PC-3 (cell line): ENCODE measurements at regions of chr10 and their contacts with region 1.

Region 1: GRCh38 chr10:74103560-74104248 is 46.9 kb downstream of the AP3M1 start:
- DNase-seq: peak; percentile 90
- ATAC-seq: peak; percentile 87
- H3K4me3 ChIP-seq: no peak overlapping the region
- H3K27ac ChIP-seq: no peak overlapping the region
- H3K4me1 ChIP-seq: no peaks in the 10 kb centered on the region
- H3K27me3 ChIP-seq: no peaks in the 10 kb centered on the region
- CTCF ChIP-seq: peak; percentile 100

Region 2: GRCh38 chr10:73848821-73849489 is 254.7 kb before region 1 on chr10:
- CTCF ChIA-PET with region 1: no interaction called
- POLR2A ChIA-PET with region 1: no interaction called
- intact Hi-C with region 1: loop called (anchors 1 kb)
- DNase-seq: peak; percentile 100
- ATAC-seq: peak; percentile 96
- H3K4me3 ChIP-seq: no peak overlapping the region
- H3K27ac ChIP-seq: no peak overlapping the region
- H3K4me1 ChIP-seq: no peaks in the 10 kb centered on the region
- H3K27me3 ChIP-seq: no peaks in the 10 kb centered on the region
- CTCF ChIP-seq: peak; percentile 100

Region 3: GRCh38 chr10:73956476-73957359 is 147.0 kb before region 1 on chr10:
- CTCF ChIA-PET with region 1: interaction called, 9 read pairs
- POLR2A ChIA-PET with region 1: no interaction called
- intact Hi-C with region 1: loop called (anchors 2 kb)
- DNase-seq: peak; percentile 67
- ATAC-seq: peak; percentile 39
- H3K4me3 ChIP-seq: no peak overlapping the region
- H3K27ac ChIP-seq: no peak overlapping the region
- H3K4me1 ChIP-seq: peaks cover 11% of the 10 kb centered on the region
- H3K27me3 ChIP-seq: no peaks in the 10 kb centered on the region
- CTCF ChIP-seq: no peak

Region 4: DNA sequence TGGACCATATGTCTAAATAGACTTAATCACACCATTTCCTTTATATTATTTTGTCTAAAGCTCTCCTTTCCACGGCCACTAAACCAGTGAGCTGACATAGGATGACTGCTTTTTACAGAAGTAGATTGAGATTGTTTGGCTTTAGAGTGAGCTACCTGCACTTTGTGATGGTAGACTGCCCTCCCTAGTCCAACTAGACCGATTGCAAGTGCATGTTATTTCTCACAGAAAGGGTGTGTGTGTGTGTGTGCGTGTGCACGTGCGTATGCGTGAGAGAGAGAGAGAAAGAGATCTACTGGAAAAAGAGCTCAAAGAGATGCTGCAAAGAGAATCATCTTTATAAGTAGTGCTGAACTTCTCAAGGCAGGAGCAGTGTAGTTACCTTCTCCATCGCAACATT is 45.0 kb before region 1 on chr10:
- CTCF ChIA-PET with region 1: no interaction called
- POLR2A ChIA-PET with region 1: no interaction called
- intact Hi-C with region 1: loop called (anchors 1 kb)
- DNase-seq: peak; percentile 77
- ATAC-seq: no peak
- H3K4me3 ChIP-seq: no peak overlapping the region; the same call in 1 of the 2 replicates
- H3K27ac ChIP-seq: peak overlapping the region; percentile 71
- H3K4me1 ChIP-seq: peaks cover 55% of the 10 kb centered on the region
- H3K27me3 ChIP-seq: no peaks in the 10 kb centered on the region
- CTCF ChIP-seq: peak; percentile 75